Ascending aorta (tissue), 2 donors: ENCODE measurements at regions of chr19 and their contacts with region 1.

Region 1: GRCh38 chr19:46624958-46625661 is at the start of gene PTGIR:
- DNase-seq: peak; percentile 72 to 96
- H3K4me3 ChIP-seq: peak within 1 kb of the TSS; percentile 47 to 77
- H3K27ac ChIP-seq: peak within 1 kb of the TSS; percentile 97 to 98
- H3K4me1 ChIP-seq: peaks cover 23 to 46% of the 10 kb centered on the region in 2 donors
- H3K27me3 ChIP-seq: no peaks in the 10 kb centered on the region
- CTCF ChIP-seq: no peak
- total RNA-seq, gene PTGIR: 120 TPM

Region 2: DNA sequence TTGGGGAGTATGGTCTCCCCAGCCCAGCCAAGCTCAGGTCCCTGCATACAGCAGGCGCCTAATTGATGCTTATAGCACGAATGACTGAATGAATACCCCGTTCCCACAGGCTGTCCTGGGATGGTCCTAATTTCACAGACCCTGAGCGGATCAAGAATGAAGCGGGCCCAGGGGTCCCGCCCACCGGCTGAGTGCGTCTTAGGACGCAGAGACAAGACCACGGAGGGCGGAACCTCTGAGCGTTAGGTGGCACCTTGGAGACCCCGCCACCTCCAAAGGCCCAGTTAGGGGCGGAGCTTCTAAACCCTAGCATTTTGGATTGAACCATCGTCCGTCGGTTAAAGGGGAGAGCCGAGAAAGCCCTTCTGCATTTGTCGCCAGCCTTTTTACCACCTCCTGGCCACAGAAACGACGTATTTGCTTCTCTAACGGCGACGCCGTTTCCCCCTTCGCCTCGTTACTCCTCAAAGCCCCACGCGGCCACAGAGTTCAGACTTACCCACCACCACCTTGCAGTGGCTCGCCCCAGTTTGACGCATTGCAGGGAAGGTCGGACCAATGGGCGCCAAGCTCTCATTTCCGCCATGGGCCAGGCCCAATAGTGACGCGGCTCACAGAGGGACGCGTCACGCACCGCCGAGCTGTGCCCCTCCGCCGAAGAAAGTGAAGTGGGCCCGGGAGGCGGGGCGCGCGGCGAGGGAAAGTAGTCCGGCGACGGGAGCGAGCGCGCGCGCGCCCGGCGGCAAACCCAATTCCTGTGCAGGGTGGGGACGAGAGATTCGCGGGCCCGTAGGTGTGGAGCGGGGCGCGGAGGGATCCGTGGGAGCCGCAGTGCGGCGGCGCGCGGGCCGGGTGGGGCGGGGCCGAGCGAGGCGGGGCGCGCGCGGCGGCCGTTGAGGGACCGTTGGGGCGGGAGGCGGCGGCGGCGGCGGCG is 24.5 kb before region 1 on chr19:
- intact Hi-C with region 1: loop called (anchors 2 kb)
- DNase-seq: peak; percentile 85 to 99
- H3K4me3 ChIP-seq: peak overlapping the region; percentile 88
- H3K27ac ChIP-seq: peak overlapping the region; percentile 93 to 98
- H3K4me1 ChIP-seq: peaks cover 9 to 31% of the 10 kb centered on the region in 2 donors
- H3K27me3 ChIP-seq: no peaks in the 10 kb centered on the region
- CTCF ChIP-seq: peak in 1 of 3 experiments; percentile 24